Dendritic cell treated with granulocyte-macrophage colony-stimulating factor and Interleukin-4, amounts not matched to agents 40 ng/mL and 50 ng/mL, for 4 days (primary cell): ENCODE measurements at regions of chr18 and their contacts with region 1.

Region 1: GRCh38 chr18:23131693-23132319 is 3.5 kb upstream of the CABLES1 start:
- H3K4me3 Mint-ChIP-seq: no peak overlapping the region
- H3K27ac Mint-ChIP-seq: no peak overlapping the region
- H3K4me1 Mint-ChIP-seq: peaks cover 41% of the 10 kb centered on the region
- H3K27me3 Mint-ChIP-seq: peaks cover 40% of the 10 kb centered on the region

Region 2: DNA sequence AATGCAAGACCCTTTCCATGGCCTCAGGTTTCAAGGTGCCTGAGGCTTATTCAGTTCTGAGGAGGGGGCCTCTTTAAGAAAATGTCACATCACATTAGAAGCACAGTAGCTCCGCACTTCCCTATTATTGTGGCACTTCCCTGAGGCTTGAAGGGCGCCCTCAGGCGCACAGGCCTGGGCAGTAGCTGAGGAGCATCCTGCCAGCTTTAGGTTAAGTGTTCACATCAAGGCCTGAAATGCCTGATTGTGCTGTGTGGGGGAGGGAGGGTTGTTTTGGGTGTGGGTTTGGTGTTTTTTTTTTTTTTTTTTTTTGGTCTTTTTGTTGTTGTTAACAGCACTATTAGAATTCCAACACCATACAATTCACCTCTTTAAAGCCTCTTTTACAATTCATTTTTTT is 111.4 kb after region 1 on chr18:
- intact Hi-C with region 1: loop called (anchors 5 kb)
- H3K4me3 Mint-ChIP-seq: no peak overlapping the region
- H3K27ac Mint-ChIP-seq: no peak overlapping the region
- H3K4me1 Mint-ChIP-seq: peaks cover 4% of the 10 kb centered on the region
- H3K27me3 Mint-ChIP-seq: no peaks in the 10 kb centered on the region

Region 3: DNA sequence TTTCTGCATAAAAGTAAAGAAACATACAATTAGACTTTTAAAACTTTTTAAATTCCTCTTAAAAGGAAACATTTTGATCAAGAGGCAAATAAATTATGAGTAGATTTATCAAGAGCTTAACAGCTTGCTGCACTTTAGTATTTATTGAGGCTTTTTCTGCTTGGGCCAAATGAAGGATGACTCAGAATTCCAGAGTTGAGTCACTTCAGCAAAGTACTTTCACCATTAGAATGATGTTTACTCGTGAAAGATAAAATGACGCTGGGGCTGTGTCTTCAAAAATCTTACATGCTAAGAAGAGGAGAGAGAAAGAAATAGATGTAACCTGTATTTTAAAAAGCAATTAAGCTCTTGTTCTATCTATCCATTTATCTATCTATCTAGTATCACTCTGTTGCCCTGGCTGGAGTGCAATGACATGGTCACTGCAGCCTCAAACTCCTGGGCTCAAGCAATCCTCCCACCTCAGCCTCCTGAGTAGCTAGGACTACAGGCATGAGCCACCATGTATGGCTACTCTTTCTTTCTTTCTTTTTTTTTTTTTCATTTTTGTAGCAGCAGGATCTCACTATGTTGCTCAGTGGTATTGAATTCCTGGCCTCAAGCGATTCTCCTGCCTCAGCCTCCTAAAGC is 246.0 kb after region 1 on chr18:
- intact Hi-C with region 1: loop called (anchors 10 kb)
- H3K4me3 Mint-ChIP-seq: no peak overlapping the region
- H3K27ac Mint-ChIP-seq: no peak overlapping the region
- H3K4me1 Mint-ChIP-seq: no peaks in the 10 kb centered on the region
- H3K27me3 Mint-ChIP-seq: no peaks in the 10 kb centered on the region

Region 4: GRCh38 chr18:23416298-23416697 is 284.5 kb after region 1 on chr18:
- intact Hi-C with region 1: loop called (anchors 5 kb)
- H3K4me3 Mint-ChIP-seq: no peak overlapping the region
- H3K27ac Mint-ChIP-seq: peak overlapping the region; percentile 78
- H3K4me1 Mint-ChIP-seq: peaks cover 19% of the 10 kb centered on the region
- H3K27me3 Mint-ChIP-seq: no peaks in the 10 kb centered on the region